OCI-LY7 (cell line): ENCODE measurements at regions of chr6 and their contacts with region 1.

Region 1: DNA sequence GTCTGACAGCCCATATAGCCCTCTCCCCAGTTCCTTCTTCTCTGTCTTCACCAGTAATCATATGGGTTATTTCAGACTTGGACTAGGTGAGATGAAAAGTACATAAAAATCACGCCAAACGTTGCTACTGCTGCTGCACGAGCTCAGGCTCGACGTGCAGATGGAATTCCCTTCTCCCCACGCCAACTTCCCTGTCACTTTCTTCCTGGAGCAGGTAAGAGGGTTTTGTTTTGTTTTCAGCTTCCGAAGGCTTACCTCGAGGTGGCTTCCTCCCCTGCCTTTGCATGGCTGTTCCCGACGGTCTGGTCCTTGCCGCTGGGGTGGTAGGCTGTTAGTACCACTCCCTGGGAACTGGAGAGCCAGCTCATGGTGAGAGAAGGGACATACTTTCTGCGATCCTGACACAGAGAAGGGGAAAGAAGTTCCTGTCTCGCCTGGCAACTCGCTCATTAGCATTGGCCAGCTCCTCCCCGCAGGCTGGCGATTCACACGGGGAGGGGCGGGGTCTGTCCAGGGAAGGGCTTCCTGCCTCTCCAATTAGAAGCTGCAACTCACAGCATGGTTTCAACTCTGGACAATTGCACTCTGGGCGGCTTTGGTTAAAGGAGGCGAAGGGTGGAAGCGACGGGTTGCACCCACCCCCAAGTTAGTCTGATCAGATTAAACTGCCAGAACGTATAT is at the start of gene ARHGAP18:
- DNase-seq: peak; percentile 80
- H3K4me3 ChIP-seq: peak within 1 kb of the TSS; percentile 82
- H3K27ac ChIP-seq: peak within 1 kb of the TSS; percentile 11
- H3K4me1 ChIP-seq: peaks cover 33% of the 10 kb centered on the region
- CTCF ChIP-seq: no peak
- total RNA-seq, gene ARHGAP18: 4.8 and 5.9 TPM in 2 replicates

Region 2: DNA sequence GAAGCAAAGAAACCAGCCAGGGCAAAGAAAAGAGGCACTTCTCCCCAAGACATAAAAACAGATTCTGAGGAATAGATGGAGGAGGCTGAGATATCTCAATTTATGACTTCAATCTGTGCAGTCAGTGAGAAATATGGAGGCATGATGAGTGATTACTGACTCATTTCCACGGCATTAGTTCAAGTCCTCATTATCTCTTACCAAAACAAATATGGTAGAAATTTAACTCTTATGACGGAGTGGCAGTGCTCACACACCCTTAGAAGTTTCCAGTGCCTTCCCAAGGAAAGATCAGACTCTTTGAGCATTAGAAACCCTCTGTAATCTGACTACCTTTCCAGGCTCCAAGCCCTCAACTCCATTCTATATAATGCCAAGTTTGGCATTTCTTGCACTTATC is 364.0 kb before region 1 on chr6:
- CTCF ChIA-PET with region 1: no interaction called
- POLR2A ChIA-PET with region 1: no interaction called
- intact Hi-C with region 1: no loop called
- DNase-seq: no peak
- H3K4me3 ChIP-seq: no peak overlapping the region
- H3K27ac ChIP-seq: no peak overlapping the region
- H3K4me1 ChIP-seq: no peaks in the 10 kb centered on the region
- CTCF ChIP-seq: no peak

Region 3: GRCh38 chr6:129683601-129684322 is 26.1 kb before region 1 on chr6:
- CTCF ChIA-PET with region 1: no interaction called
- POLR2A ChIA-PET with region 1: interaction called, 18 read pairs
- intact Hi-C with region 1: loop called (anchors 2 kb)
- DNase-seq: peak; percentile 82
- H3K4me3 ChIP-seq: peak overlapping the region; percentile 42
- H3K27ac ChIP-seq: peak overlapping the region; percentile 47
- H3K4me1 ChIP-seq: peaks cover 56% of the 10 kb centered on the region
- CTCF ChIP-seq: no peak

Region 4: GRCh38 chr6:129695373-129696027 is 14.4 kb before region 1 on chr6:
- CTCF ChIA-PET with region 1: no interaction called
- POLR2A ChIA-PET with region 1: interaction called, 20 read pairs
- intact Hi-C with region 1: no loop called
- DNase-seq: no peak
- H3K4me3 ChIP-seq: no peak overlapping the region
- H3K27ac ChIP-seq: no peak overlapping the region
- H3K4me1 ChIP-seq: peaks cover 6% of the 10 kb centered on the region
- CTCF ChIP-seq: no peak

Region 5: GRCh38 chr6:129730477-129731165 is 20.7 kb after region 1 on chr6:
- CTCF ChIA-PET with region 1: no interaction called
- POLR2A ChIA-PET with region 1: interaction called, 13 read pairs
- intact Hi-C with region 1: no loop called
- DNase-seq: peak; percentile 64
- H3K4me3 ChIP-seq: no peak overlapping the region
- H3K27ac ChIP-seq: no peak overlapping the region
- H3K4me1 ChIP-seq: no peaks in the 10 kb centered on the region
- CTCF ChIP-seq: peak; percentile 95